Naive thymus-derived CD4-positive, alpha-beta T cell (primary cell): ENCODE measurements at regions of chr6 and their contacts with region 1.

Region 1: GRCh38 chr6:133923938-133924593 is 29.0 kb upstream of the TBPL1 start:
- DNase-seq: peak in 7 of 9 donors; percentile 26 to 64 (median 57)
- ATAC-seq: peak; percentile 89
- H3K4me3 ChIP-seq: no peak overlapping the region
- H3K4me3 Mint-ChIP-seq: no peak overlapping the region
- H3K27ac ChIP-seq: no peak overlapping the region
- H3K27ac Mint-ChIP-seq: no peak overlapping the region
- H3K4me1 ChIP-seq: no peaks in the 10 kb centered on the region
- H3K4me1 Mint-ChIP-seq: no peaks in the 10 kb centered on the region
- H3K27me3 ChIP-seq: no peaks in the 10 kb centered on the region
- H3K27me3 Mint-ChIP-seq: peaks cover 26 to 41% (median 38%) of the 10 kb centered on the region in 5 donors

Region 2: DNA sequence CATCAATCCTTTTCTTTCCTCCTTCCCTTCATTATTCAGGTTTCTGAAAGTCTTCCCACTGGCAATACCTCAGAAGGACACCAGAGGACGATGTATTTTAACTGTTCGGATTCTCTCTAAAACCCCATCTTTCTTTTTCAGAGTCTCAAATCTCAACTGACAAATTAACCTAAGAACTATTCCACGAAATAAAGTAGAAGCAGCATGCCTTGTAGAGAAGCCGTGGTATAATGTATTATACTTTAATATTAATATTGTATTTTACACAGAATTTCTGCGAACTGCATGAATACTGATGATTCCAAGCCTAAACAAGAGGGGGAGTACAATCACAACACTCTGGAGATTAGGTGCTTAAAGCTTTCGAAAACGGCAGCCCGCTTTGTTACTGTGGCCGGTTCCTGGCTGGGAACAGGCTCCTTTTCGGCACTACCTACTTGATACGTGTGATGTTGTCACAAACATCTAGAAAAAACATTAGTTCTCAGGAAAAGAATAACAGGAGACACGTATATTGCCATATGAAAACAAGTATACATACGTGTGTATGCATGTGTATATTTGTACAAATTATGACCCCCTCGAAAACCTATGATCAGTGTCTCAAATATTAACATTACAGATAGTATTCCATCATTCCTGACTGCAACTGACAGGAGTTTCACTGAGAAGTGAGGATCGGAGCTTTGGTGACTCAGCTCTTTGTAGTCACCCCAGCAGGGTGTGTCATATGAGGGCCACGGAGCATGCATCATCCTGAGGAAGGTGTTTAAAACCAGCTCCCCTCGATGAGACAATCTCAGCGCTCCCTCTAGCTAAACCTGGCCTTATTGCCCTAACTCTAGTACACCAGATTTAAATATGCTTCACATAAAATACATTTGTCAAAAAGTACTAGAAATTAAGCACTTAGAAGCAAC is 354.8 kb before region 1 on chr6:
- CTCF ChIA-PET with region 1: no interaction called
- POLR2A ChIA-PET with region 1: no interaction called
- intact Hi-C with region 1: loop called in 1 of 2 experiments (anchors 2 kb)
- DNase-seq: no peak
- ATAC-seq: no peak
- H3K4me3 ChIP-seq: no peak overlapping the region
- H3K4me3 Mint-ChIP-seq: peak overlapping the region; percentile 47 to 77 (median 62)
- H3K27ac ChIP-seq: no peak overlapping the region
- H3K27ac Mint-ChIP-seq: no peak overlapping the region
- H3K4me1 ChIP-seq: no peaks in the 10 kb centered on the region
- H3K4me1 Mint-ChIP-seq: peaks cover 0 to 8% (median 6%) of the 10 kb centered on the region in 7 donors
- H3K27me3 ChIP-seq: no peaks in the 10 kb centered on the region
- H3K27me3 Mint-ChIP-seq: peaks cover 14 to 54% (median 47%) of the 10 kb centered on the region in 5 donors

Region 3: GRCh38 chr6:133983099-133983939 is 59.3 kb after region 1 on chr6:
- CTCF ChIA-PET with region 1: interaction called, 9 read pairs
- POLR2A ChIA-PET with region 1: no interaction called
- intact Hi-C with region 1: loop called in 1 of 2 experiments (anchors 1 kb)
- DNase-seq: peak in 8 of 9 donors; percentile 28 to 50 (median 42)
- ATAC-seq: peak; percentile 95
- H3K4me3 ChIP-seq: no peak overlapping the region
- H3K4me3 Mint-ChIP-seq: peak overlapping the region; percentile 2 to 79 (median 48)
- H3K27ac ChIP-seq: no peak overlapping the region
- H3K27ac Mint-ChIP-seq: peak overlapping the region in 6 of 9 donors; percentile 5 to 70 (median 23)
- H3K4me1 ChIP-seq: peaks cover 0 to 12% of the 10 kb centered on the region in 2 donors
- H3K4me1 Mint-ChIP-seq: peaks cover 29 to 57% (median 42%) of the 10 kb centered on the region in 7 donors
- H3K27me3 ChIP-seq: no peaks in the 10 kb centered on the region
- H3K27me3 Mint-ChIP-seq: no peaks in the 10 kb centered on the region

Region 4: DNA sequence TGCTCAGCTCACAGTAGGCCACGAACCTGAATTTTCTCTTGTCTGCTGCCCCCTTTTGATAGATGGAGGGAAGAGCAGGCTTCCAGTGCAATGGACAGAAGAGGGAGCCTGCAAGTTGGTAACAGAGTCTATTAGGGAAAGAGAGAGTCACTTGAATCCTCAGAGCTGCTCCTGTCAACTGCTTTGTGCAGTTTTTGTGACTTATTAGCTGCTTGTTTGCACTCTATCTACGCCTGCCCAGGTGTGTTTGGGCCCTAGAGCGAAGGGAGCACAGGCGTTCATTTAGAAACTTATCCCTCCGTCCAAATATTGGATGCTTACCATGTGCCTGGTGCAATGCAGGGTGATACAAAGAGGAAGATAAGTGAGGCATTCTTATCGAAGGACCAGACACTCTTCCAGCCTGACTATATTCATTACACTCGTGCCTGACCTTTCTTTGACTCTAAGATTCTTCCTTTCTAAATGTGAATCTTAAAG is 139.9 kb after region 1 on chr6:
- CTCF ChIA-PET with region 1: interaction called, 68 read pairs
- POLR2A ChIA-PET with region 1: no interaction called
- intact Hi-C with region 1: loop called (anchors 1 kb)
- DNase-seq: peak; percentile 13 to 72 (median 56)
- ATAC-seq: peak; percentile 92
- H3K4me3 ChIP-seq: no peak overlapping the region
- H3K4me3 Mint-ChIP-seq: no peak overlapping the region
- H3K27ac ChIP-seq: no peak overlapping the region
- H3K27ac Mint-ChIP-seq: peak overlapping the region in 1 of 9 donors; percentile 36
- H3K4me1 ChIP-seq: no peaks in the 10 kb centered on the region
- H3K4me1 Mint-ChIP-seq: peaks cover 0 to 7% (median 0%) of the 10 kb centered on the region in 7 donors
- H3K27me3 ChIP-seq: no peaks in the 10 kb centered on the region
- H3K27me3 Mint-ChIP-seq: peaks cover 0 to 8% (median 0%) of the 10 kb centered on the region in 5 donors

Region 5: GRCh38 chr6:134103006-134103405 is 178.9 kb after region 1 on chr6:
- CTCF ChIA-PET with region 1: interaction called, 93 read pairs
- POLR2A ChIA-PET with region 1: no interaction called
- intact Hi-C with region 1: no loop called
- DNase-seq: no peak
- ATAC-seq: no peak
- H3K4me3 ChIP-seq: no peak overlapping the region
- H3K4me3 Mint-ChIP-seq: no peak overlapping the region
- H3K27ac ChIP-seq: no peak overlapping the region
- H3K27ac Mint-ChIP-seq: no peak overlapping the region
- H3K4me1 ChIP-seq: no peaks in the 10 kb centered on the region
- H3K4me1 Mint-ChIP-seq: no peaks in the 10 kb centered on the region
- H3K27me3 ChIP-seq: no peaks in the 10 kb centered on the region
- H3K27me3 Mint-ChIP-seq: peaks cover 22 to 37% (median 28%) of the 10 kb centered on the region in 5 donors